Stomach (tissue), 19 donors: ENCODE measurements at regions of chr16 and their contacts with region 1.

Region 1: DNA sequence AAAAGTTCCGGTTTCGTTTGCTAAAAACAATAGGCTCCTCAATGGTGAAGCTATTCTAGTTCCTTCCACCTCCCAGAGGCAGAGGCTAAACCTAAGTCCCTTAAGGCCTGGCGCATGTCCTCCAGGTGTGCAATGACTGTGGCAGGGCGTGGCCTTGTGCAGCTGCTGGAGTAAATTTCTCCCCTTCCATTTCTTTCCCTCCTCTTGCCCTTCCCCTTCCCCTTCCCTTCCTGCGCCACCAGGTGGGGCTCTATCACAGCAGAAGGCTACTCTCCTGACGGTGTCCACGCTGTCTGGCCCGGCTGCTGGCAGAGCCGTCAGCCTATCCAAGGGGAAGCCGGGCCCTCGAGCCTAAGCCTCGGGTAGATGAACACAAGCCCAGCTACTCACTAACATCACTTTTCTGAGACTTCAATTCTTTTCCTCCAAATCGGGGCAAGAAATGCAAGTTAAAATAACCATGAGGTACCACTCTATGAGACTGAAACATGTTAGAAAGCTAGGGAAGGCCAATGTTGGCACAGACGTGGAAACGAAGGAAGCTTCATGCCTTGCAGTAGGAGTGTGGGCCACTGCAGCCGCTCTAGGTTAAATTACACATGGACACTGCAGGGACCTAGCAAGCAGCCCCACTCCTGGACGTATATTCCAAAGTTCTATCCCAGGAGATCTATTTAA is 34.4 kb downstream of the C16orf78 start:
- DNase-seq: peak; percentile 84 to 95
- H3K4me3 ChIP-seq: no peak overlapping the region
- H3K27ac ChIP-seq: no peak overlapping the region
- H3K4me1 ChIP-seq: peaks cover 0 to 8% (median 4%) of the 10 kb centered on the region in 4 donors
- H3K27me3 ChIP-seq: peaks cover 0 to 9% (median 0%) of the 10 kb centered on the region in 3 donors
- CTCF ChIP-seq: peak in 5 of 7 experiments; percentile 71 to 95 (median 86)
- EP300 ChIP-seq: no peak
- POLR2A ChIP-seq: no peak

Region 2: DNA sequence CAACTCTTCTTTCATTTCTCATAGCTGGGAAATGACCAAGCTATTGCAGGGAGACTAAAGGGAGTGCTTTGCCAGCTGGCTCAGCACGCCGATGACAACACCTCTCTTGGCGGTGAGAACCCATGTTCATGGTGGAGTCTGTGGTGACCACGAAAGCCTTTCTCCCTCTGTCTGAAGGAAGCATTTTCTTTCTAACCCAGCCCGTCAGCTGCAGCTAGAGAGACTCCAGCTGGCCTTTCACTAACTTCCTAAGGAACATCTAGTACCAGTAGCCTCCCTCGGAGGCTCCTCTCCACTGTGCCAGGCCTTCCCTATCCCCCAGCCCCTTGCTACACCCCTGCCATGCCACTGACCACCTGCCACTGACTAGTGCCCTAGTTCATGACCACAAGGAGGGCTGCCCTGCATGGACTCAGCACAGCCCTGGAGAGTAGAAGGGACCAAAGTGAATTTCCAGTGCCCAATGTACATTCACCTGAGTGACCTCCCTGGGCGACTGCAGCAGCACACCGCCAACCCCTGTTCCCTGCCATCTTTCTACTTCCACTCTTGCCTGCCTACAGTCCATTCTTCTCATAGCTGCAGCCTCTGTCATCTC is 207.7 kb before region 1 on chr16:
- intact Hi-C with region 1: no loop called
- DNase-seq: no peak
- H3K4me3 ChIP-seq: no peak overlapping the region
- H3K27ac ChIP-seq: no peak overlapping the region
- H3K4me1 ChIP-seq: no peaks in the 10 kb centered on the region
- H3K27me3 ChIP-seq: peaks cover 0 to 28% (median 0%) of the 10 kb centered on the region in 3 donors
- CTCF ChIP-seq: no peak
- EP300 ChIP-seq: no peak
- POLR2A ChIP-seq: no peak

Region 3: GRCh38 chr16:49592546-49593423 is 184.8 kb after region 1 on chr16:
- intact Hi-C with region 1: loop called (anchors 5 kb)
- DNase-seq: peak; percentile 30 to 74
- H3K4me3 ChIP-seq: no peak overlapping the region
- H3K27ac ChIP-seq: no peak overlapping the region
- H3K4me1 ChIP-seq: peaks cover 0 to 18% (median 8%) of the 10 kb centered on the region in 4 donors
- H3K27me3 ChIP-seq: peaks cover 0 to 8% (median 0%) of the 10 kb centered on the region in 3 donors
- CTCF ChIP-seq: peak in 5 of 7 experiments; percentile 25 to 81 (median 67)
- EP300 ChIP-seq: no peak
- POLR2A ChIP-seq: no peak

Region 4: DNA sequence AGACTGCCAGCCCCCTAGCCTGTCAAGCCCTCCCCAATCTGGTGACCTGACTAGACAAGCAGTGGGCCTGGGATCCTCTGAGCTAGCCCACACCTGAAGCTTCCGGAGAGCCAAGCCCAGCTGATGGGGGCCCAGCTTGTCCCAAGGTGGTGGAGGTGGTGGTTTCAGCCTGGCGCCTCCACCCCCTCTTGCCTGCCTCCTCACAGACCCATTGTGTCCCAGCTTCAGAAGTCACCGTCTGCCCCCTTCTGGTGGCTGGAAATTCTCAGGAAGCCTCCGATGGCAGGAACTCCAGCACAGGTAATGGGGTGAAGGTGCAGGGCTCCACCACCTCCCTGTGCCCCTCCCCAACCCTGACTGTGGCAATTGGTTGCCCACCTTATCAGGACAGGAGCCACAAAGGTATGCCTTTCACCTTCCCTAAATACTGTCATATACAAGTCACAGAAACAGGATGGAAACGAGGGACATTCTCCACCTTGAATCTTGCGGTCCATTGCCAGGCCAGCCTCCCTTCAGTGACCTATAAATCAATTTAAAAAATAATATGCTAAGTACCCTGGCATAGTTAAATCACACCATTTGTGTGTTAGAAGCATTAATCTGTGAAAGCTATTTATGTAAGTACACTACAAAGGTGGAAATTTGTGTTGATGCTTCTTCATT is 513.9 kb after region 1 on chr16:
- intact Hi-C with region 1: loop called (anchors 5 kb)
- DNase-seq: peak; percentile 62 to 90
- H3K4me3 ChIP-seq: no peak overlapping the region
- H3K27ac ChIP-seq: no peak overlapping the region
- H3K4me1 ChIP-seq: no peaks in the 10 kb centered on the region
- H3K27me3 ChIP-seq: peaks cover 0 to 13% (median 0%) of the 10 kb centered on the region in 3 donors
- CTCF ChIP-seq: peak in 5 of 7 experiments; percentile 32 to 57 (median 41)
- EP300 ChIP-seq: no peak
- POLR2A ChIP-seq: no peak